Naive thymus-derived CD4-positive, alpha-beta T cell (primary cell): ENCODE measurements at regions of chr7 and their contacts with region 1.

Region 1: DNA sequence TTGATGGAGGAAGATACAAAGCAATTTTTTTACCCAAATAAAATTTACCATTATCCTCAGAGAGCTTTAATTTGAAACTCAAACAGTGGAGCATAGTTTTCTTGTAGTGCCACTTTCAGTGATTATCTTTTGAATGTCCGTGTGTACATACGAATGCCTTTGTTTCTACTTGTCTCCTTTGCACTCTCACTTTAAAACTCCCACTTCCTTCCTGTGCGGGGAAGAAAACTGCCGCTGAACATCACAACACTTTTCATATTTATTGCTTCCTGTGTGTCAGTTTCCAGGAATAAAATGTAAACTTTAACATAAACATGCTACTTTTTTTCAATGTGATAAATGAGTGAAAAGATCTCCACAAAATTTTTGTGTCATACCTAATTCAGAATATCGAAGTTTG is 102.4 kb downstream of the SEMA3A start:
- DNase-seq: peak in 8 of 9 donors; percentile 10 to 72 (median 53)
- ATAC-seq: peak; percentile 64
- H3K4me3 ChIP-seq: no peak overlapping the region
- H3K4me3 Mint-ChIP-seq: peak overlapping the region; percentile 51 to 81 (median 74)
- H3K27ac ChIP-seq: peak overlapping the region; percentile 55
- H3K27ac Mint-ChIP-seq: peak overlapping the region; percentile 52 to 94 (median 87)
- H3K4me1 ChIP-seq: peaks cover 0 to 27% of the 10 kb centered on the region in 2 donors
- H3K4me1 Mint-ChIP-seq: peaks cover 15 to 83% (median 69%) of the 10 kb centered on the region in 7 donors
- H3K27me3 ChIP-seq: no peaks in the 10 kb centered on the region
- H3K27me3 Mint-ChIP-seq: no peaks in the 10 kb centered on the region

Region 2: GRCh38 chr7:83882551-83882950 is 209.7 kb before region 1 on chr7:
- CTCF ChIA-PET with region 1: no interaction called
- POLR2A ChIA-PET with region 1: no interaction called
- intact Hi-C with region 1: no loop called
- DNase-seq: no peak
- ATAC-seq: no peak
- H3K4me3 ChIP-seq: no peak overlapping the region
- H3K4me3 Mint-ChIP-seq: no peak overlapping the region
- H3K27ac ChIP-seq: no peak overlapping the region
- H3K27ac Mint-ChIP-seq: no peak overlapping the region
- H3K4me1 ChIP-seq: no peaks in the 10 kb centered on the region
- H3K4me1 Mint-ChIP-seq: no peaks in the 10 kb centered on the region
- H3K27me3 ChIP-seq: no peaks in the 10 kb centered on the region
- H3K27me3 Mint-ChIP-seq: no peaks in the 10 kb centered on the region

Region 3: GRCh38 chr7:83936056-83936708 is 156.0 kb before region 1 on chr7:
- CTCF ChIA-PET with region 1: no interaction called
- POLR2A ChIA-PET with region 1: no interaction called
- intact Hi-C with region 1: no loop called
- DNase-seq: peak in 8 of 9 donors; percentile 13 to 68 (median 58)
- ATAC-seq: peak; percentile 63
- H3K4me3 ChIP-seq: no peak overlapping the region
- H3K4me3 Mint-ChIP-seq: no peak overlapping the region
- H3K27ac ChIP-seq: no peak overlapping the region
- H3K27ac Mint-ChIP-seq: no peak overlapping the region
- H3K4me1 ChIP-seq: no peaks in the 10 kb centered on the region
- H3K4me1 Mint-ChIP-seq: peaks cover 0 to 5% (median 3%) of the 10 kb centered on the region in 7 donors
- H3K27me3 ChIP-seq: no peaks in the 10 kb centered on the region
- H3K27me3 Mint-ChIP-seq: peaks cover 0 to 4% (median 0%) of the 10 kb centered on the region in 5 donors

Region 4: DNA sequence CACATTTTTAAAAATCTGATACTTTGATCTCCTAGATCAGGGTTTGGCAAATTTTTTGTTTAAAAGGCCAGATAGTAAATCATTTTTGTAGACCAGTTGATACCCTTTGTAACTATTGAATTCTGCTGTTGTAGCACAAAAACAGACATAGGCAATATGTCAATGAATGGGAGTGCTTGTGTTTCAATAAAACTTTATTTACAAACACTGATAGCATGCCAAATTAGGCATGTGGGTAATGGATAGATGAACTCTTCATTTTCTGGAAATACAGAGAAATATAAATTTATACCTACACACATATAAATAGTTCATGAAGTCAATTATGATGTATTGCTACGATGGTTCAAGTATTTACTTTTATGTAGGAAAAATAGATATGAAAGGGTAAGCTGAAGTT is 42.0 kb after region 1 on chr7:
- CTCF ChIA-PET with region 1: no interaction called
- POLR2A ChIA-PET with region 1: no interaction called
- intact Hi-C with region 1: loop called in 1 of 2 experiments (anchors 5 kb)
- DNase-seq: no peak
- ATAC-seq: no peak
- H3K4me3 ChIP-seq: no peak overlapping the region
- H3K4me3 Mint-ChIP-seq: no peak overlapping the region
- H3K27ac ChIP-seq: no peak overlapping the region
- H3K27ac Mint-ChIP-seq: no peak overlapping the region
- H3K4me1 ChIP-seq: no peaks in the 10 kb centered on the region
- H3K4me1 Mint-ChIP-seq: peaks cover 0 to 10% (median 2%) of the 10 kb centered on the region in 7 donors
- H3K27me3 ChIP-seq: no peaks in the 10 kb centered on the region
- H3K27me3 Mint-ChIP-seq: no peaks in the 10 kb centered on the region

Region 5: DNA sequence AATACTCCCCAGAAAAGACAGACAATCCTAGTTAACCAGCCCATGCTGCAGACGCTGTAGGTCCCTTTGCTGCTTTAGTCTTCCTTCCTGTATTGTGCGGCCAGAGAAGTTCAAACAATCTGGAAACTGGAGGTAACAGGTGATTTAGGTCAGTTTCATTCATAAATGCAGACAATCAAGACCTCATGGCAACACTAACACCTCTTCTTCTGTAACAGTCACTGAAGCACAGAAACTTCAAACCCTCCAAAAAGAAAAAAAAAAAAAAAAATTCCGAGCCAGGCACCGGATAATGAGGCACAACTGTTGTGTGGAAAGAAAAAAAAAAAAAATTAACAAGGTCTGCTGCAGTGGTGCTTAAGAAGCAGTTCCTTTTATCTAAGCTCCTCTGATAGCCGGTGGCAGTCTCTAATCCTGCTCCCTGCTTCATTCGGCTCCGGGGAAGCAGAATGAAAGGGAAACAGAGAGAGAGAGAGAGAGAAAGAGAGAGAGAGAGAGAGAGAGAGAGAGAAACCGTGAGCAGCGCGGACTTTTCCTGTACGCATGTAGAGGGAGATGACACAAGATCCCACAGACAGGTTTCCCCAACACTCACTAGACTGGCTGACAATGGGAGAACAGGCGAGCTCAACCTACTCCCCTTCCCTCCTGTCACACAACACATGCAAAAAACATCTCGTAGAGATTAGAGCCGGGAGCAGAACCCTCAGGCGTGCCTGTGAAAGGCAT is 102.5 kb after region 1 on chr7 and contains the start of gene SEMA3A:
- CTCF ChIA-PET with region 1: no interaction called
- POLR2A ChIA-PET with region 1: no interaction called
- intact Hi-C with region 1: loop called (anchors 2 to 10 kb)
- DNase-seq: peak; percentile 6 to 56 (median 42)
- ATAC-seq: peak; percentile 65
- H3K4me3 ChIP-seq: peak within 1 kb of the TSS; percentile 59
- H3K4me3 Mint-ChIP-seq: peak within 1 kb of the TSS; percentile 88 to 99 (median 95)
- H3K27ac ChIP-seq: peak within 1 kb of the TSS; percentile 2
- H3K27ac Mint-ChIP-seq: peak within 1 kb of the TSS; percentile 56 to 97 (median 84)
- H3K4me1 ChIP-seq: peaks cover 0 to 7% of the 10 kb centered on the region in 2 donors
- H3K4me1 Mint-ChIP-seq: peaks cover 2 to 45% (median 31%) of the 10 kb centered on the region in 7 donors
- H3K27me3 ChIP-seq: no peaks in the 10 kb centered on the region
- H3K27me3 Mint-ChIP-seq: peaks cover 0 to 25% (median 5%) of the 10 kb centered on the region in 5 donors
- total RNA-seq, gene SEMA3A: 0.29 to 3.0 (median 1.6) TPM